Right ventricle myocardium inferior (tissue), 1 donor: ENCODE measurements at regions of chr5 and their contacts with region 1.

Region 1: GRCh38 chr5:102971697-102972293 is 148.1 kb downstream of the GIN1 start:
- DNase-seq: no peak
- ATAC-seq: peak; percentile 16

Region 2: GRCh38 chr5:102782311-102782770 is 189.5 kb before region 1 on chr5:
- intact Hi-C with region 1: loop called (anchors 5 kb)
- DNase-seq: no peak
- ATAC-seq: no peak